CD4-positive, alpha-beta T cell (primary cell): ENCODE measurements at regions of chr3 and their contacts with region 1.

Region 1: DNA sequence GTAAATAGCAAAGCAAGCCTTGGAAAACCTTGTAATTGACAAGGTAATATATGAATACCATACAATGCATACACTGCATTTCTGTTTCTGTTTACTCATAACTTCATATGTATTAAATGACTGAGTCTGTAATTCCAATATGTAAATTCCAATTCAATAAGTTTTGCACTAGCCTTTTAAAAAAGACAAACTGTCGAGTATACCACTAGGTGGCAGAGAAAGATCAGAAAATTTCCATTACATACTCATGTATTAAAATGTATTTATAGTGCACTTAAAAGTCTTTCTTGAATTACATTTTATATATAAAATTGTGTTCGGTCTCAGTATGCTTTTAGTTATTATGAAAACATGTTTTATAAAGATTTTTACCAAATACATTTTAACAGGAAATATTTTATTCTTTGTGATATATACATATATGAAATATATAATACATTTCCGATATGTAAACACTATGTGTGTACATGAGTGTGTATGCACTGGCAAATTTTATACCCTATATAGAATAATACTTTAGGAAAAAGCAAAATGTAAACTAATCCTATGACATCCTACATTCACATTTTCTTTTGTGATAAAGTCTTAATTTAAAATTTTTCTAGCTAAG is 216.8 kb downstream of the VGLL3 start:
- DNase-seq: no peak
- ATAC-seq: no peak
- H3K4me3 ChIP-seq: no peak overlapping the region
- H3K4me3 Mint-ChIP-seq: no peak overlapping the region
- H3K27ac ChIP-seq: no peak overlapping the region
- H3K27ac Mint-ChIP-seq: no peak overlapping the region
- H3K4me1 ChIP-seq: no peaks in the 10 kb centered on the region
- H3K4me1 Mint-ChIP-seq: no peaks in the 10 kb centered on the region
- H3K27me3 ChIP-seq: no peaks in the 10 kb centered on the region
- H3K27me3 Mint-ChIP-seq: no peaks in the 10 kb centered on the region
- CTCF ChIP-seq: no peak

Region 2: DNA sequence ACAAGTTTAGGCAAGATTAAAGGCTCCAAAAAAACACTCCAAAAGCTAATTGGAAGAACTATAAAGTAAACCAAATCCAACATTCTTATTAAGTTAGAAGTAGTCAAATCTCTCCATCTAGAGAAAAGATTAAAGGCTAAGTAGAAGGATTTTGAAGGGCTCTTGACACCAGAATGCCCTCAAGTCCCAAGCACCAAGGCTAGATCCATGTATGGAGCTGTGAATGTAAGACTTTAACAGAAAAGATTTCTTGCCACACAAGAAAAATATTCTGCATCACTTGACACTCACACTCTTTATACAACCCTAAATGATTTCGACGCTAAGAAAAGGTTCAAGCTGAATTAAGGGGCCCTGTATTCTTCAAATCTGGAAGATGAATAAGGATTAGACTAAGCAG is 128.4 kb before region 1 on chr3:
- CTCF ChIA-PET with region 1: no interaction called
- POLR2A ChIA-PET with region 1: no interaction called
- intact Hi-C with region 1: no loop called
- DNase-seq: no peak
- ATAC-seq: no peak
- H3K4me3 ChIP-seq: no peak overlapping the region
- H3K4me3 Mint-ChIP-seq: no peak overlapping the region
- H3K27ac ChIP-seq: no peak overlapping the region
- H3K27ac Mint-ChIP-seq: no peak overlapping the region
- H3K4me1 ChIP-seq: no peaks in the 10 kb centered on the region
- H3K4me1 Mint-ChIP-seq: no peaks in the 10 kb centered on the region
- H3K27me3 ChIP-seq: no peaks in the 10 kb centered on the region
- H3K27me3 Mint-ChIP-seq: no peaks in the 10 kb centered on the region
- CTCF ChIP-seq: no peak

Region 3: DNA sequence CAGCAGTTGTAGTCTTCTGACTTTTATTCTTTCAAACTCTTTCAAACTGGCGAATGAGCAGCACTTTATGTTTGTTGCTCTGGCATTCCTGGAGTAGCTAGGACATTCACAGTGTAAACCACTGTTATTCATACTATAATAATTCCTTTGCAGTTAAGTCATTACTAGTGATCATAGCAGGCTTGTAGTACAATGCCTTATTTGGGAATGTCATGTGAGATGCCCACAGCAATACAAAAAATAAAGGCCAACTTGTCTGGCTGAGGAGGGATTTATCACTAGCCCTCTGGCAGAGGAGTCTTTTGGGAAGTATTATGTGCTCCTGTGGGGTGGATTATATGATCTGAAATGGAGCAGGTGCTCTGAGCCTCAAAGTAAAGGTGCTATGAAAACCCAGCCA is 19.6 kb after region 1 on chr3:
- CTCF ChIA-PET with region 1: no interaction called
- POLR2A ChIA-PET with region 1: no interaction called
- intact Hi-C with region 1: no loop called
- DNase-seq: no peak
- ATAC-seq: no peak
- H3K4me3 ChIP-seq: no peak overlapping the region
- H3K4me3 Mint-ChIP-seq: no peak overlapping the region
- H3K27ac ChIP-seq: no peak overlapping the region
- H3K27ac Mint-ChIP-seq: no peak overlapping the region
- H3K4me1 ChIP-seq: no peaks in the 10 kb centered on the region
- H3K4me1 Mint-ChIP-seq: no peaks in the 10 kb centered on the region
- H3K27me3 ChIP-seq: no peaks in the 10 kb centered on the region
- H3K27me3 Mint-ChIP-seq: no peaks in the 10 kb centered on the region
- CTCF ChIP-seq: no peak

Region 4: GRCh38 chr3:87167628-87168456 is 393.7 kb after region 1 on chr3:
- CTCF ChIA-PET with region 1: no interaction called
- POLR2A ChIA-PET with region 1: no interaction called
- intact Hi-C with region 1: loop called (anchors 10 kb)
- DNase-seq: peak in 6 of 14 experiments; percentile 1 to 54 (median 36)
- ATAC-seq: peak; percentile 34
- H3K4me3 ChIP-seq: no peak overlapping the region
- H3K4me3 Mint-ChIP-seq: no peak overlapping the region
- H3K27ac ChIP-seq: no peak overlapping the region
- H3K27ac Mint-ChIP-seq: no peak overlapping the region
- H3K4me1 ChIP-seq: no peaks in the 10 kb centered on the region
- H3K4me1 Mint-ChIP-seq: peaks cover 4% of the 10 kb centered on the region
- H3K27me3 ChIP-seq: no peaks in the 10 kb centered on the region
- H3K27me3 Mint-ChIP-seq: peaks cover 30% of the 10 kb centered on the region
- CTCF ChIP-seq: peak; percentile 76